HAP-1 (cell line): ENCODE measurements at regions of chr13 and their contacts with region 1.

Region 1: DNA sequence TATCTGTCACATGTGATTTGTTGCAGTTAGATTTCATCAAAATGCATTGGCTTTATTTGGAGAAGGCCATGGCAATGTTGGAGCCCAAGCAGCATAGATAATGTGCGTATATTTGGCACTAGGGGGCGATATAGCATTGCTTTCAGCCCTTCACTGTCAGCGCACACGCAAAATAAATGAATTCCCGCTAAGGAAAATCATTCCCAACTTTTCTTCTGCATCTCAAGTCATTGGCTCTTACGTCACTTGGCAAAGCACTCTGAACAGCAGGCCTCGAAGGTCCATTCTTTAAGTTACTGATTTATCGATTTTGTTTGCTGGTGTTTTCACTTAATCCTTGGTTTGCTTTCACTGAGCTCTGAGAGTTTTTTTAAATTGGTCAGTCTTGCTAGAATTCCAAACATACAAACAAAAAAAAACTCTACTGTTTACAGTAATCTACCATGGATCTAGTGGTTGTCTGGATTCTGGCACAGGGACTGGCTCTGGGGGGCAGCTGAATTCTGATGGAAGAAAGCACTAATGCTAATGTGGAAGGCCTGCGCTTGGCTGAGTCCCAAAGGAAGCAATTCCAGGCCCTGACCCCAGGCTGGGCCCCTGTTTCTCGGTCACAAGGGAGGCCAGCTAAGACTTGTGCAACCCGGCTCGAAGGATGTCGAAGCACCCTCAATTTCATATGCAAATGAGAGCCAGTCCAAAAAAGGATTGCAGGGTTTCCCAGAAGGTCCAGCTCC is 97.7 kb upstream of the IPO5 start:
- DNase-seq: peak; percentile 70 to 76
- H3K4me3 ChIP-seq: no peak overlapping the region
- H3K4me1 ChIP-seq: peaks cover 5% of the 10 kb centered on the region; the same call in 1 of the 2 replicates
- H3K27me3 ChIP-seq: 0 out of 2 replicates have a peak, but pooled peaks cover 2% of the 10 kb centered on the region

Region 2: DNA sequence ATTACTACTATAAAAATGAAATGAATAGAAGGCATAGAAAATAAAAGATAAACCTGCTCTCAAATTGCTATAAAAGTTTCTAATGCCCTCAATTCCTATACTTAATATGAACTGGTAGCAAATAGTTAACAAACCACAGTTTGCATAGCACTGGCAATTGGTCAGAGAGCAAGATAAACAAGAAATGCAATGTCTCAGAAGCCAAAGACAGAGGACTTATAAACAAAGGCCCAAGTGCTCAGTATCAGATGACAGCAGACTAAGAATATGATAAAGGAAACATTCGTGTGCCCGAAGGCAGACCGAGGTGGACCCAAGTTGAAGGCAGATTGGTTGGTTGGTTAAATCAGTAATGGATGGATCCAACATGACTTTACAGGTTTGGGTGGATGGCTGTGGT is 148.4 kb after region 1 on chr13:
- in situ Hi-C with region 1: loop called (anchors 10 kb)
- DNase-seq: no peak
- H3K4me3 ChIP-seq: no peak overlapping the region
- H3K4me1 ChIP-seq: peaks cover 3% of the 10 kb centered on the region; the same call in 1 of the 2 replicates
- H3K27me3 ChIP-seq: no peaks in the 10 kb centered on the region

Region 3: GRCh38 chr13:98429977-98430736 is 574.4 kb after region 1 on chr13:
- in situ Hi-C with region 1: loop called (anchors 10 kb)
- DNase-seq: no peak
- H3K4me3 ChIP-seq: no peak overlapping the region
- H3K4me1 ChIP-seq: no peaks in the 10 kb centered on the region
- H3K27me3 ChIP-seq: no peaks in the 10 kb centered on the region

Region 4: DNA sequence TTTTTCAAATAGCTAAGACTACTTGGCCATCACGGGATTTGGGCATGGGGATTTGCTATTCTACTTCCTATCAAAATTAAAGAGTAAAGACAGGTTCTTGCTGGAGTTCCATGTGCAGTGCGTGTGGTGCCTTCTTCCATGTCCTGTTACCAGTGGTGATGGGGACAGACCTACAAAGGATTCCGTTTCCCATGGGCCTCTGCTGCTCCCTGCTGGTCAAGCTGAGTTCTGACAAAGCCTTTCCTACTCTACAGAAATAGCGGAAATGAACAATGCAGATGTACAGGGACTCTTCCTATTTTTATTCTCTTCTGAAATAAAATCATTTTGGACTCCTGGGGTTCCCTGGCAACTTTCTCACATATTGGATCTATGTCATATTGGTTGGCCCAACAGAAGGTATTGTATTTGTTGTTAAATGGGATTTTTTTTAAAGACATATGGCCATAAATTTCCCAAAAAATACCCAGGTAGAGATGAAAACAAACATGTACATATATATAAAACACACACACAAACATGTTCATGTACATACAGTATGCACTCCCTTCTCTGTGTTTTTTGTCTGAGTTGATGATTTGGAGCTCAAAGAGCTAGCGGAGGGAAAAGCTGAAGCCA is 987.2 kb after region 1 on chr13:
- in situ Hi-C with region 1: loop called (anchors 10 kb)
- DNase-seq: peak; percentile 66 to 90
- H3K4me3 ChIP-seq: no peak overlapping the region
- H3K4me1 ChIP-seq: peaks cover 12% of the 10 kb centered on the region
- H3K27me3 ChIP-seq: no peaks in the 10 kb centered on the region

Region 5: GRCh38 chr13:99075268-99076191 is 1219.8 kb after region 1 on chr13:
- in situ Hi-C with region 1: no loop called
- DNase-seq: no peak
- H3K4me3 ChIP-seq: no peak overlapping the region
- H3K4me1 ChIP-seq: no peaks in the 10 kb centered on the region
- H3K27me3 ChIP-seq: no peaks in the 10 kb centered on the region